GM12878 (cell line): ENCODE measurements at regions of chr21 and their contacts with region 1.

Region 1: DNA sequence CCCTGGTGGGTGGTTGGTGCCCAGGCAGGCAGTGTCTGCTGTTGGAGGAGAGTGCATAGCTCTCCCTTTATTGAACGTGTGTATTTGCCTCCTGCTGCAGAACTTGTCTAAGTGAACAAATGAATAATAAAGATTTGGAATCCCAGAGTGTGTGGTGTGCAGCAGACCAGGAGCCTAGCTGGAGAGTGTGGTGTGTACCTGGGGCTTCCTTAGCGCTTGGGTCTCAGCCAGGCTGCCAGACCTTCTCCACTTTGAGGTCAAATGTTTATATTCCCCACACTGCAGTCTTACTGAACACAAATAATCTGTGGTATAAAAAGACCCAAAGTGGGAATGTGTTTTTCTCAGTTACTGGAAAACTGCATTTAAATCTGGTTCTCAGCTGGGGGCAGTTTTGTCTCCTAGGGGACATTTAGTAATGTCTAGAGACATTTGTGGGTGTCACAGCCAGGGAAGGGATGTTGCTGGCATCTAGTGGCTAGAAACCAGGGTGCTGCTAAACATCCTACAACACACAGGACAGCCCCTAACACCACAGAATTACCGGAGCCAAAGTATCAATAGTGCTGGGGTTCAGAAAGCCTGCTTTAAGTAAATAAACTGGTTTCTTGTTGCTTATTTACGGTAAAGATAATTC is 23.6 kb downstream of the SLC37A1 start:
- DNase-seq: no peak
- ATAC-seq: peak; percentile 31
- H3K4me3 ChIP-seq: no peak overlapping the region
- H3K27ac ChIP-seq: no peak overlapping the region; the same call in 1 of the 2 replicates
- H3K4me1 ChIP-seq: peaks cover 51% of the 10 kb centered on the region
- H3K27me3 ChIP-seq: no peaks in the 10 kb centered on the region
- CTCF ChIP-seq: peak; percentile 61 to 82 (median 68)
- EP300 ChIP-seq: peak in 1 of 2 experiments; percentile 49; a peak in 1 of 4 replicates
- POLR2A ChIP-seq: no peak
- RAD21 ChIP-seq: peak; percentile 85

Region 2: GRCh38 chr21:42145569-42146272 is 391.5 kb before region 1 on chr21:
- CTCF ChIA-PET with region 1: interaction called, 24 read pairs
- POLR2A ChIA-PET with region 1: no interaction called
- RAD21 ChIA-PET with region 1: interaction called, 10 read pairs
- SMC1A ChIA-PET with region 1: interaction called, 11 read pairs
- in situ Hi-C with region 1: loop called (anchors 5 kb)
- intact Hi-C with region 1: loop called (anchors 2 kb)
- DNase-seq: peak; percentile 17
- ATAC-seq: peak; percentile 92
- H3K4me3 ChIP-seq: no peak overlapping the region
- H3K27ac ChIP-seq: no peak overlapping the region
- H3K4me1 ChIP-seq: no peaks in the 10 kb centered on the region
- H3K27me3 ChIP-seq: no peaks in the 10 kb centered on the region
- CTCF ChIP-seq: peak; percentile 90 to 96 (median 91); a peak in 5 of 6 replicates
- EP300 ChIP-seq: no peak
- POLR2A ChIP-seq: no peak
- RAD21 ChIP-seq: peak; percentile 87

Region 3: GRCh38 chr21:42258153-42258884 is 278.9 kb before region 1 on chr21:
- CTCF ChIA-PET with region 1: interaction called, 9 read pairs
- POLR2A ChIA-PET with region 1: no interaction called
- RAD21 ChIA-PET with region 1: interaction called, 19 read pairs
- SMC1A ChIA-PET with region 1: interaction called, 9 read pairs
- in situ Hi-C with region 1: no loop called
- intact Hi-C with region 1: no loop called
- DNase-seq: no peak
- ATAC-seq: peak; percentile 97
- H3K4me3 ChIP-seq: no peak overlapping the region
- H3K27ac ChIP-seq: no peak overlapping the region
- H3K4me1 ChIP-seq: no peaks in the 10 kb centered on the region
- H3K27me3 ChIP-seq: no peaks in the 10 kb centered on the region; a peak in 1 of 4 replicates
- CTCF ChIP-seq: peak; percentile 90 to 97 (median 90)
- EP300 ChIP-seq: no peak
- POLR2A ChIP-seq: no peak
- RAD21 ChIP-seq: peak; percentile 93

Region 4: DNA sequence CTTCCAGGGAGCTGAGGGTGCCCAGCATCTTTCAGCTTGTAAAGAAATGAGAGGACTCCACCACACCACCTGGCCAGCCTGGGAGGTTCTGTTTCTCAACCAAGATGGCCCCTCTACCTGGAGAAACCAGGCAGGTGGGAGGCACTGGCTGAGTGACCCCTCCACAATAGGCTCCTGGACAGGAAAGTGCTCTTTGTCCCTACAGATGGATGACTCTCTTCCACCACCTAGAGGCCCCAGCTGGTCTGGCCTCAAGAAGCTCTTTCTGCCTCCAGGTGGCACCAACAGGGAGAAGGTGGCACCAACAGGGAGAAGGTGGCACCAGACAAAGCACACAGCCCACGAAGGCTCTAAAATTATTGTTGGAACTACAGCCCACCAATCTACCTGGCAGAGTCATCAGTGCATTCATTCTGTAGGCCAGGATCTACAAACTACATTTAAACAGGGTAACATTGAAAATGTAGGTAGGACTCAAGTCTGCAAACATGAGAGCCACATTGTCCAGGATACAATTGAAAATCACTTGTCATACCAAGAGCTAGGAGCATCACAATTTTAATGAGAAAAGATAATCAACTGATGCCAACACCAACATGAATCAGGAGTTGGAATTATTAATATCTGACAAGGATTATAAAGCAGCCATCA is 155.8 kb before region 1 on chr21:
- CTCF ChIA-PET with region 1: interaction called, 10 read pairs
- POLR2A ChIA-PET with region 1: no interaction called
- RAD21 ChIA-PET with region 1: interaction called, 5 read pairs
- SMC1A ChIA-PET with region 1: interaction called, 4 read pairs
- in situ Hi-C with region 1: no loop called
- intact Hi-C with region 1: no loop called
- DNase-seq: no peak
- ATAC-seq: peak; percentile 62
- H3K4me3 ChIP-seq: no peak overlapping the region
- H3K27ac ChIP-seq: no peak overlapping the region
- H3K4me1 ChIP-seq: 0 out of 2 replicates have a peak, but pooled peaks cover 3% of the 10 kb centered on the region
- H3K27me3 ChIP-seq: no peaks in the 10 kb centered on the region
- CTCF ChIP-seq: peak; percentile 38 to 59 (median 49); a peak in 5 of 6 replicates
- EP300 ChIP-seq: no peak
- POLR2A ChIP-seq: no peak
- RAD21 ChIP-seq: peak; percentile 58

Region 5: DNA sequence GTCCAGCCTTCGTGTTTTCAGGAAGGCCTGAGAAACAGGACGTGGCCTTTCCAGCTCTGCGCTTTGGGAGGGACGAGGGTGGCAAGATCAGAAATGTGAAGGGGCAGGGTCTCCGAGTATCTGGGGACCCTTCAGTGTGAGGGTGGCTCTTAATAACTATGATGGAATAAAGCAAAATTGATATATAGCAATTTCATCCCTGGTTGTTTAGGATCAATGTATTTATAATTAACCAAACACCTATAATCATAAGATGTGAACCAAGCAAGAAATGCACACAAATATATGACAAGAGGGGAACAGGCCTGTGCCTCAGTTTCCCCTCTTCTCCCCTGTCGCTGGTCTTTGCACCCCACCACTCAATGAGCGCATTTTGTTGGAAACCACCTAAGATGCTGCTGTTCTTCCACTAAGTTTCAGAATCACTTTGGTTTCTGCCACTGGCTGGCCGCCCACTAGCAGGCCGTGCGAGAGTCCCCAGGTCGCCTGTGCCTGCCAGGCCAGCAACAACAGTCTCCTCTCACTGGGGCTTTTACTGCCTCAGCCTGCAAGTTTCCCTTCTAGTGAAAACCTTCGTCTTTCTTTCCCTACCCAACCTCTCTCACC is 96.9 kb before region 1 on chr21:
- CTCF ChIA-PET with region 1: interaction called, 6 read pairs
- POLR2A ChIA-PET with region 1: no interaction called
- RAD21 ChIA-PET with region 1: interaction called, 6 read pairs
- SMC1A ChIA-PET with region 1: interaction called, 10 read pairs
- in situ Hi-C with region 1: no loop called
- intact Hi-C with region 1: no loop called
- DNase-seq: peak; percentile 70
- ATAC-seq: peak; percentile 96
- H3K4me3 ChIP-seq: no peak overlapping the region
- H3K27ac ChIP-seq: peak overlapping the region; percentile 59
- H3K4me1 ChIP-seq: peaks cover 18% of the 10 kb centered on the region
- H3K27me3 ChIP-seq: no peaks in the 10 kb centered on the region
- CTCF ChIP-seq: no peak
- EP300 ChIP-seq: peak; percentile 56 to 81; a peak in 3 of 4 replicates
- POLR2A ChIP-seq: no peak
- RAD21 ChIP-seq: peak; percentile 31; the same call in 1 of the 2 replicates

Region 6: GRCh38 chr21:42460391-42461204 is 76.6 kb before region 1 on chr21:
- CTCF ChIA-PET with region 1: interaction called, 168 read pairs
- POLR2A ChIA-PET with region 1: interaction called, 54 read pairs
- RAD21 ChIA-PET with region 1: interaction called, 146 read pairs
- SMC1A ChIA-PET with region 1: interaction called, 268 read pairs
- in situ Hi-C with region 1: no loop called
- intact Hi-C with region 1: no loop called
- DNase-seq: peak; percentile 83
- ATAC-seq: peak; percentile 71
- H3K4me3 ChIP-seq: no peak overlapping the region
- H3K27ac ChIP-seq: peak overlapping the region; percentile 60
- H3K4me1 ChIP-seq: peaks cover 52% of the 10 kb centered on the region
- H3K27me3 ChIP-seq: no peaks in the 10 kb centered on the region
- CTCF ChIP-seq: no peak
- EP300 ChIP-seq: peak; percentile 59 to 97; a peak in 3 of 4 replicates
- POLR2A ChIP-seq: no peak
- RAD21 ChIP-seq: no peak

Region 7: GRCh38 chr21:42496122-42496900 is 40.9 kb before region 1 on chr21 and contains the start of gene RSPH1:
- CTCF ChIA-PET with region 1: interaction called, 3 read pairs
- POLR2A ChIA-PET with region 1: interaction called, 5 read pairs
- RAD21 ChIA-PET with region 1: interaction called, 16 read pairs
- SMC1A ChIA-PET with region 1: interaction called, 12 read pairs
- in situ Hi-C with region 1: no loop called
- intact Hi-C with region 1: no loop called
- DNase-seq: peak; percentile 96
- ATAC-seq: peak; percentile 99
- H3K4me3 ChIP-seq: peak within 1 kb of the TSS; percentile 80
- H3K27ac ChIP-seq: peak within 1 kb of the TSS; percentile 41
- H3K4me1 ChIP-seq: peaks cover 13% of the 10 kb centered on the region
- H3K27me3 ChIP-seq: no peaks in the 10 kb centered on the region
- CTCF ChIP-seq: no peak; a peak in 1 of 6 replicates
- EP300 ChIP-seq: no peak
- POLR2A ChIP-seq: peak; percentile 69
- RAD21 ChIP-seq: no peak
- polyA plus RNA-seq, gene RSPH1: 0.37 to 0.38 TPM